Natural killer cell (primary cell): ENCODE measurements at regions of chr5 and their contacts with region 1.

Region 1: DNA sequence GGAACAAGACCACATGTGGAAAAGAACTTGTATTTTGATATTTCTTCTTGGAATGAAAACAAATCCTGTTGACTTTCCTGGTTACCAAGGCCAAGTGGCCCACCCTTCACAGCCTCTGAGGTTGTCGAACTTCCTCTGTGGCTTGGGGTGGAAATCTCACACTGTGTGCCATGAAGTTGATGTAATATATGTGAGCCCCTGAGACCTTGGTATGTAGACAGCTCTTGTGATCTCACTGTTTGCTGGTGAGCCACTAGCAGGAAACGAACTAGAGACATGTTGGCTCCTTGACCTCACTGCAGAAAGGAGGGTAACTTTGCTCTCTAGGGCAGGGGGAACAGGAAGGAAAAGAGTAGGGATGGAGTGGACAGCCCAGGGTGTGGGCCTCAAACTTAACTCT is 159.4 kb downstream of the ARHGAP26 start:
- DNase-seq: peak; percentile 59 to 75
- ATAC-seq: peak; percentile 85 to 91 (median 86)
- H3K4me3 ChIP-seq: no peak overlapping the region
- H3K4me3 Mint-ChIP-seq: peak overlapping the region; percentile 83
- H3K27ac ChIP-seq: peak overlapping the region; percentile 93
- H3K27ac Mint-ChIP-seq: peak overlapping the region; percentile 94 to 98
- H3K4me1 ChIP-seq: peaks cover 55% of the 10 kb centered on the region
- H3K4me1 Mint-ChIP-seq: peaks cover 92 to 96% of the 10 kb centered on the region in 2 donors
- H3K27me3 ChIP-seq: no peaks in the 10 kb centered on the region
- H3K27me3 Mint-ChIP-seq: no peaks in the 10 kb centered on the region
- CTCF ChIP-seq: no peak

Region 2: DNA sequence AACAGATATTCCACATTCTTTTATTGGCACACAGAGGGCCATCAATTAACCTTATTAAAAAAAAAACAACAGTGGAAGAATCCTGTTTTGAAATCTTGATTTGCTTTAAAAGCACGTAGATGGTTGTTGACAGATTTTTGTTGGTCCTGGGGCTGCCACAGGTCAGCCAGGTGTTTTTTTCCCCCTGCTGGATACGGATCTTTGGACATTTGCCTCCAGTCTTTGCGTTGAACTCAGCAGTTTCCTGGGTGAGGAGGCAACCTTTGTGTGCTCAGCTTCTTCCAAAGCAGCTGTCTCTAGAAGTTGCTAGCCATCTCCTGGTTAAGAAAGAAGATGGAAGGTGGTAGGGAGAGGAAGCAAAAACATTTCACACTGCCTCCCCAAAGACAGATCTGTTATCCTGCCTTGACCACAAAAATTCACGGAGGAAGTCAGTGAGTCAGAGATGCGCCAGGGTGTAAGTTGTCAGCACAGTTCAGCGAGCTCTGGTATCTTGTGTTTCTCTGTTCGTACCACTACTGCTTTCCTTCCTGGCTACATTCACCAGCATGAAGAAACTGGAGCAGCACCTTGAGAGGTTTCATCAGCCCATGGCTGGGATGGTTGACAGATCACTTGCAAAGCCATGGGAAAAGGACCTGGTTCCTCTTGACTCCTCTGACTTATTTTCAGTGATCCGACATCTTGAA is 47.9 kb after region 1 on chr5:
- intact Hi-C with region 1: loop called (anchors 2 kb)
- DNase-seq: peak; percentile 63 to 87
- ATAC-seq: peak; percentile 83 to 96 (median 93)
- H3K4me3 ChIP-seq: no peak overlapping the region
- H3K4me3 Mint-ChIP-seq: peak overlapping the region; percentile 82
- H3K27ac ChIP-seq: peak overlapping the region; percentile 93
- H3K27ac Mint-ChIP-seq: peak overlapping the region; percentile 89 to 91
- H3K4me1 ChIP-seq: peaks cover 78% of the 10 kb centered on the region
- H3K4me1 Mint-ChIP-seq: peaks cover 97 to 98% of the 10 kb centered on the region in 2 donors
- H3K27me3 ChIP-seq: no peaks in the 10 kb centered on the region
- H3K27me3 Mint-ChIP-seq: no peaks in the 10 kb centered on the region
- CTCF ChIP-seq: no peak

Region 3: DNA sequence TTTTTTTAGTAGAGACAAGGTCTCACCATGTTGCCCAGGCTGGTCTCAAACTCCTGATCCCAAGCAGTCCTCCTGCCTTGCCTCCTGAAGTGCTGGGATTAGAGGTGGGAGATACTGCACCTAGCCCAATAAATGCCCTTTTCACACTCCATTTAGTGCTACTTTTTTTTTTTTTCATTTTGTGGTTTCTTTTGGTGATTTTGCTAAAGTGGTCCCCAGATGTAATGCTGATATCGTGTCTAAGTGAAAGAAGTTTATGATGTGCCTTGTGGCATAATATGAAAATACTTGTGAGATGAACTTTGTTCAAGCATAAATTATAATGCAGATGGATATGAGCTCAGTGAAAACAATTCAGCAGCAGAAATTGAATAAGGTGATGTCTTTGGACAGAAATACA is 68.0 kb after region 1 on chr5:
- intact Hi-C with region 1: loop called (anchors 1 kb)
- DNase-seq: peak in 1 of 2 donors; percentile 42
- ATAC-seq: peak in 2 of 3 donors; percentile 4 to 15
- H3K4me3 ChIP-seq: no peak overlapping the region
- H3K4me3 Mint-ChIP-seq: peak overlapping the region; percentile 61
- H3K27ac ChIP-seq: peak overlapping the region; percentile 86
- H3K27ac Mint-ChIP-seq: peak overlapping the region; percentile 88 to 100
- H3K4me1 ChIP-seq: peaks cover 65% of the 10 kb centered on the region
- H3K4me1 Mint-ChIP-seq: peaks cover 82 to 84% of the 10 kb centered on the region in 2 donors
- H3K27me3 ChIP-seq: no peaks in the 10 kb centered on the region
- H3K27me3 Mint-ChIP-seq: no peaks in the 10 kb centered on the region
- CTCF ChIP-seq: no peak

Region 4: GRCh38 chr5:143008809-143009521 is 79.4 kb after region 1 on chr5:
- intact Hi-C with region 1: loop called (anchors 1 kb)
- DNase-seq: peak; percentile 71 to 95
- ATAC-seq: peak; percentile 88 to 95 (median 88)
- H3K4me3 ChIP-seq: no peak overlapping the region
- H3K4me3 Mint-ChIP-seq: peak overlapping the region; percentile 69
- H3K27ac ChIP-seq: peak overlapping the region; percentile 94
- H3K27ac Mint-ChIP-seq: peak overlapping the region; percentile 96 to 100
- H3K4me1 ChIP-seq: peaks cover 46% of the 10 kb centered on the region
- H3K4me1 Mint-ChIP-seq: peaks cover 58 to 63% of the 10 kb centered on the region in 2 donors
- H3K27me3 ChIP-seq: no peaks in the 10 kb centered on the region
- H3K27me3 Mint-ChIP-seq: no peaks in the 10 kb centered on the region
- CTCF ChIP-seq: peak; percentile 40